ENCODE measurements at regions of chr21 and their contacts with region 1.

Region 1: DNA sequence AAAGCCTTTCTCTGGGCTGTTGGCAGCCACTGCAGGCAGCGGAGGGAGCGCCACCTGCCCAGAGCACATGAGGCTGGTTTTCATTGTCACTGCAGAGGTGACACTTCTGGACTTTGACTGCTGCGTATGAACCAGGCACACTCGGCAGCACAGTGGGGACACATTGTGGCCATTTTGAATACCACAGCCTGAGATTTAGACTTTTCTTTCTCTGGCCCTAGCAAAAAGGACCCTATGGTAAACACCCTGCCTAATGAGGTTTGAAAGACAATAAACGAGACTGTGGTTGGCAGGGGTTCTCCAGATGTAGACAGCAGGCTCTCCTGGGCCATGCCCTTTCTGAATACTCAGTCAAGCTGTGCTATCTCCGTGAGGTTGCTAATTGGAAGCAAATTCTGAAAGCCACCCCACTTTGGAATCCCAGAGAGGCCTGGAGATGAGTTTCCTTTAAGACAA is 12.0 kb upstream of the KCNE2 start:
- DNase-seq: peak; percentile 45
- H3K4me3 Mint-ChIP-seq: no peak overlapping the region
- H3K27ac Mint-ChIP-seq: no peak overlapping the region
- H3K4me1 Mint-ChIP-seq: peaks cover 3% of the 10 kb centered on the region
- H3K27me3 Mint-ChIP-seq: peaks cover 3% of the 10 kb centered on the region

Region 2: GRCh38 chr21:33915368-33916199 is 436.2 kb before region 1 on chr21 and contains the start of gene ATP5PO:
- CTCF ChIA-PET with region 1: interaction called, 11 read pairs
- intact Hi-C with region 1: no loop called
- DNase-seq: peak; percentile 98
- H3K4me3 Mint-ChIP-seq: peak within 1 kb of the TSS; percentile 98
- H3K27ac Mint-ChIP-seq: peak within 1 kb of the TSS; percentile 95
- H3K4me1 Mint-ChIP-seq: peaks cover 27% of the 10 kb centered on the region
- H3K27me3 Mint-ChIP-seq: no peaks in the 10 kb centered on the region
- total RNA-seq, gene ATP5PO: 230 TPM

Region 3: DNA sequence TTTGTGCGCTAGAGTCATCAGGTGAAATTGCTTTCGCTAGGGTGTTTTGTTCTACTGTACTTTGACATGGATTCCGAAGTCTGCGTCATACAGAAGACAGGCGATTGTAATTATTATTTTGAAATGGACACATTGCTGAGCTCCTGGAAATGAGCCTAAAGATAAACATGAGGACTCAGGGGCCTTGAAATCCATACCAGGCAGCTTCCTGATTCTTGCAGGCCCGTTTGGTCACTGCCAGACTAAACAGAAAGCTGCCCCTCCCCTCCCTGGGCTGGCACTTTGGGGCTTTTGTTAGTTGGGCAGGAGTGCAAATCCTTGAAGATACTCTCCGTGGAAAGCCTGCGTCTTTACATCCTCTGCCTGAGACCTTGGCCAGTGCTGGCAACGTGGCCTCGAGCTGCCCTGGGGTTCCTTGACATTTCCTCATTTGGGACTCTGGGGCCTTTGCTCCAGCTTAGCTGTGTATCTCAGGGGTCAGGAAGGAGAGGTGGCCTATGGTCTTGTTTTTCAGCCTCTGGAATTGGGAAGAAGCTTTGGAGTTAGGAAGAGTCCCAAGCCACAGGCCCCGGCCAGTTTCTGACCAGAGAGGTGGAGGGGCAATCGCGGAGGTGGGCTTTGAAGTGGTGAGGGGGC is 14.9 kb before region 1 on chr21:
- CTCF ChIA-PET with region 1: interaction called, 14 read pairs
- intact Hi-C with region 1: no loop called
- DNase-seq: no peak
- H3K4me3 Mint-ChIP-seq: no peak overlapping the region
- H3K27ac Mint-ChIP-seq: no peak overlapping the region
- H3K4me1 Mint-ChIP-seq: no peaks in the 10 kb centered on the region
- H3K27me3 Mint-ChIP-seq: no peaks in the 10 kb centered on the region

Region 4: GRCh38 chr21:34553151-34553952 is 201.5 kb after region 1 on chr21:
- CTCF ChIA-PET with region 1: no interaction called
- intact Hi-C with region 1: no loop called
- DNase-seq: no peak
- H3K4me3 Mint-ChIP-seq: no peak overlapping the region
- H3K27ac Mint-ChIP-seq: no peak overlapping the region
- H3K4me1 Mint-ChIP-seq: peaks cover 7% of the 10 kb centered on the region
- H3K27me3 Mint-ChIP-seq: no peaks in the 10 kb centered on the region

Region 5: DNA sequence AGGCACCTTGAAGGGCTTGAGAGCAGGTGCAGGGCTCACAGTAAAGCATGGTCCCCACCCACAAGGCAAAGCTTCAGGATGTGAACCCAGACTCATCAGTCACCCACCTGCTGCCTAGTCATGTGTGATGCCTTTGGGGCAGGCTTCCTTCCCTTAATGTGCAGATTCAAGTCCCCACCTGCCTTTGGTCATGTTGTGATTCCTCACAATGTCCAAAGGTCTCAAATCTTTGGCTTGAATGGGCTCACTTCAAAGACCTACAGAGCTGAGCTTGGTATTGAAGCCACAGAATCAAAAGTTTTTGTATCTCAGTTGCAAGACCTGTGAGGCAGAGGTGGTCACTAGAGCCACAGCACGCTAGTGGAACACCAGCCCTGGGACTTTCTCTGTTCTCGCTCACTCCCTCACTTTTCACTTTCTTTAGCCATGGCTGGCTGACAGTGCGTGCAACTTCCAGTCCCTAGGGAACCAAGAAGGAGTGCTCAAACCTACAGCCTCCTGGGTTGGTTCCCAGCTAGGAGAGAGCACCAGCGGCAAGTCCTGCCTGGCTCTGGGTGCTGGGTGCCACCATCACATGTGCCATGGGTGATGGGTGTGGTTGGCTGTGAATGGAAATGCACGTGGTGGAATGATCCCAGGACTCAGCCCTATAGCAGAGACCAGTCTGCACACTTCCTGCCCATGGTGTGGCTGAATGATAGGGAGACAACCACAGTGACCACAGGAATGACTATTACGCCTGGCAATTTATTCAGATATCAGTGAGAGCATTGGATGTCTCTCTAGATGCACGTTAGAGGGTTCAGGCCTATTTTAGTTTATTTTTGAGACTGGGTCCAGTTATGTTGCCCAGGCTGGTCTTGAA is 290.6 kb after region 1 on chr21:
- CTCF ChIA-PET with region 1: no interaction called
- intact Hi-C with region 1: no loop called
- DNase-seq: no peak
- H3K4me3 Mint-ChIP-seq: no peak overlapping the region
- H3K27ac Mint-ChIP-seq: no peak overlapping the region
- H3K4me1 Mint-ChIP-seq: peaks cover 18% of the 10 kb centered on the region
- H3K27me3 Mint-ChIP-seq: no peaks in the 10 kb centered on the region